Aorta (tissue), 5 donors: ENCODE measurements at regions of chr9 and their contacts with region 1.

Region 1: DNA sequence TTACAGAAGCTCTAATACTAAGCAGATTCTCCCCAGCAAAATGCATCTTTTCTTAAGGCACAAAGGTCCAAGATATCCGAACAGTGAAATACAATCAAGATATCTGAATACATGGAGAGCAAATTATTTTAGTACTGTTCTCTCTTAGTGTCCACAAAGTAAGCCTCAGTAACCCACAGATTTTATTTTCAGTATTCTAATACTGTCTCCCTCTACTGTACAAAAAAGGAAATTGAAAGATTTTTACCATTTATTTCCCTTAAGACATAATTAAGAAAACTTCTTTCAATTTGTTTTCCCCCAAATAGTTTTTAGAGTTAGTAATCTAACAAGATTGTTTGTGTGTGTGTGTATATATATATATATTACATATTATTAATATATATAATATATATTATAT is 24.7 kb upstream of the NOL6 start:
- DNase-seq: no peak
- ATAC-seq: no peak
- H3K4me3 ChIP-seq: no peak overlapping the region
- H3K27ac ChIP-seq: no peak overlapping the region
- H3K4me1 ChIP-seq: no peaks in the 10 kb centered on the region
- H3K27me3 ChIP-seq: no peaks in the 10 kb centered on the region

Region 2: DNA sequence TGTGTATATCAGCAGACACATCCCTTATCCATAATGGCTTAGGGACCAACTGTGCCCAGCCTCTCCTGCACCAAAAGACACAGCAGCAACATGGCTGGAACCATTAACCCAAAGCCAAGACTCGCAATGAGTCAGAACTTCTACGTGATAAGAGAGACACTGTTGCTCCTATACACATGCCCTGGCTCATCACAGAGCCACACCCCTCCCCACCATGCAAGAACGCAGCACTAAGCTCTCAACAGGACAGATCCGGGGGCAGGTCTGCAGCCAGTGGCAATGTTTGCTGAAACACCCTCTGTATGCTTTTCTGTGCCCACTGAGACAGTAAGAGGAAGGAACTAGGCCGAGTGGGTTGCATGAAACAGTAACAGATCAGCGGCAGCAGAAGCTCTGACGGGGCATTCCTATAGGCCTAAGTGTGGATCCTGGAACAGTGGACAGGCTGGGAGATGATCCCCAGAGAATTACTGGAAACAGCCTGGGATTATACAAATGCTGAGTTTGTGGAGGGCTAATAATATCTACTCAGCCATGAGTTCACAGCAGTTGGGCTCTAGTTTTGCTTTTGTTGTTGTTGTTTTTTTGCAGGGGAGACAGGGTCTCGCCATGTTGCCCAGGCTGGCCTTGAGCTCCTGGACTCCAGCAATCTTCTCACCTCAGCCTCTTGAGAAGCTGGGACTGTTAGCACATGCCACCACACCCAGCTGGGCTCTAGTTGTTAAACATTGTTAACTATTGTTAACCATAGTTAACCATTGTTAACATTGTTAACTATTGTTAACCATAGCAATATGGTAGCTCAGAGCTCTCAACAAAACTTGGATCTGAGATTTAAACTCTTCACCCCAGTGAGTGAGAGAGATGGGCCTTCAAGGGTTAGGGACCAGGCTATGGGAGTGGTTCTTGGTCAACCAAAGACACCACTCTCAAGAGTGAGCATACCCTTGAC is 372.2 kb before region 1 on chr9:
- intact Hi-C with region 1: no loop called
- DNase-seq: no peak
- ATAC-seq: peak; percentile 33
- H3K4me3 ChIP-seq: no peak overlapping the region
- H3K27ac ChIP-seq: no peak overlapping the region
- H3K4me1 ChIP-seq: peaks cover 2 to 7% of the 10 kb centered on the region in 2 donors
- H3K27me3 ChIP-seq: no peaks in the 10 kb centered on the region

Region 3: GRCh38 chr9:33430942-33431341 is 67.4 kb before region 1 on chr9:
- intact Hi-C with region 1: loop called in 1 of 2 experiments (anchors 10 kb)
- DNase-seq: no peak
- ATAC-seq: no peak
- H3K4me3 ChIP-seq: no peak overlapping the region
- H3K27ac ChIP-seq: no peak overlapping the region
- H3K4me1 ChIP-seq: no peaks in the 10 kb centered on the region
- H3K27me3 ChIP-seq: no peaks in the 10 kb centered on the region